Ovary (tissue), 10 donors: ENCODE measurements at regions of chr13 and their contacts with region 1.

Region 1: DNA sequence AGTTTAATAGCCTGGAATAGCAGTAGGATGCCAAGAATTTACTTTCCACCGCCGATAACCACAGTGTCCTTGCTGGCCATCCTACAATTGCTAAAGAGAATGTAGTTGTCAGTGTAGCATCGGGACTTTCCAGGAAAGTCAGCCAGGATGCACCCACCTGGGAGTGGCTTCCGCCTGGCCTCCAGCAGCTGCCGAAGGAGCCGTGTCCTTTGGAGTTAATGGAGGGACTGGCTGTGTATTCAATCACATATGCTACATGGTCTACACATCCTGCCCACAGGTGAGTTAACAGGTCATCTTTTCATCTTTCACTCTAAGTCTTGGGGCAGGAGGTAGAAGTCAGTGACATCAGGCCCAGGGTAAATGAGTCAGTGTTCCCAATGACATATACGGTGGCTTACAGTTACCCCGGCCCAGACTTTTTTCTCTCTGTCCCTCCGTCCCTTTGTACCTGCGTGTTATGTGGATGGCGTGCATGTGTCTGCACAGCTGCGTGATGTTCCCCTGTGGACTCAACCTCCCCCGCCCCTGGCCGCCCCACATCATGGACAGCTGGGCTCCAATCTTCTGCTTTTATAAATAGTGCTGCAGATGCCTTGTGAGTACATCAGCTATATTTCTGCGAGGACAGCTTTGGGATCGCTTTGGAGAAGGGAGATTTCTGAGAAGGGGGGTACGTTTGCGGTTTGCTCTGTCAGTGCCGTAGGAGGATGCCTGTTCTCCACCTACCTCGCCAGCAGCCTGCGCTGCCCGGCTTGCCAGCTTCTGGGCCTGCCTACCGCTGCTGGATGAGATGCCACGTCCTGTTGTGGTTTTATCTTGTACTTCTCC is 63.1 kb downstream of the ATP11A start:
- DNase-seq: no peak
- H3K4me3 ChIP-seq: no peak overlapping the region
- H3K27ac ChIP-seq: no peak overlapping the region
- H3K4me1 ChIP-seq: peaks cover 2% of the 10 kb centered on the region
- H3K27me3 ChIP-seq: no peaks in the 10 kb centered on the region
- CTCF ChIP-seq: no peak
- EP300 ChIP-seq: no peak
- POLR2A ChIP-seq: no peak

Region 2: GRCh38 chr13:111913366-111914081 is 839.4 kb before region 1 on chr13:
- intact Hi-C with region 1: no loop called
- DNase-seq: peak in 1 of 5 donors; percentile 13
- H3K4me3 ChIP-seq: no peak overlapping the region
- H3K27ac ChIP-seq: no peak overlapping the region
- H3K4me1 ChIP-seq: no peaks in the 10 kb centered on the region
- H3K27me3 ChIP-seq: no peaks in the 10 kb centered on the region
- CTCF ChIP-seq: no peak
- EP300 ChIP-seq: no peak
- POLR2A ChIP-seq: no peak

Region 3: DNA sequence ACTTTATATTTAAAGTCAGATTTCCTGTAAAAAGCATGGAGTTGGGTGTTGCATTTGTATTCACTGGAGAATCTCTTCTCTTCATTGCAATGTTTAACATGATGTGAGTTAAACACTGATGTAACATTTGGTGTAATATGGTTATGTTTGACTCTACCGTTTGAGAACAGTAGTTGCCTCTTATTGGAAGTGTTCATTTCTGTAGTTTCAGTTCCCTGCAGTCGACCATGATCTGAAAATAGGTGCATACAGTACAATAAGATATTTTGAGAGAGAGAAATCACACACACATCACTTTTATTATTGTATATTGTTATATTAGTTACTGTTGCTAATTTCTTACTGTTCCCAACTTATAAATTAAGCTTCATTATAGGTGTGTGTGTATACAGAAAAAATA is 482.0 kb before region 1 on chr13:
- intact Hi-C with region 1: loop called in 1 of 4 experiments (anchors 5 kb)
- DNase-seq: no peak
- H3K4me3 ChIP-seq: no peak overlapping the region
- H3K27ac ChIP-seq: no peak overlapping the region
- H3K4me1 ChIP-seq: no peaks in the 10 kb centered on the region
- H3K27me3 ChIP-seq: no peaks in the 10 kb centered on the region
- CTCF ChIP-seq: no peak
- EP300 ChIP-seq: no peak
- POLR2A ChIP-seq: no peak